GM10248 (cell line): ENCODE measurements at regions of chr3 and their contacts with region 1.

Region 1: DNA sequence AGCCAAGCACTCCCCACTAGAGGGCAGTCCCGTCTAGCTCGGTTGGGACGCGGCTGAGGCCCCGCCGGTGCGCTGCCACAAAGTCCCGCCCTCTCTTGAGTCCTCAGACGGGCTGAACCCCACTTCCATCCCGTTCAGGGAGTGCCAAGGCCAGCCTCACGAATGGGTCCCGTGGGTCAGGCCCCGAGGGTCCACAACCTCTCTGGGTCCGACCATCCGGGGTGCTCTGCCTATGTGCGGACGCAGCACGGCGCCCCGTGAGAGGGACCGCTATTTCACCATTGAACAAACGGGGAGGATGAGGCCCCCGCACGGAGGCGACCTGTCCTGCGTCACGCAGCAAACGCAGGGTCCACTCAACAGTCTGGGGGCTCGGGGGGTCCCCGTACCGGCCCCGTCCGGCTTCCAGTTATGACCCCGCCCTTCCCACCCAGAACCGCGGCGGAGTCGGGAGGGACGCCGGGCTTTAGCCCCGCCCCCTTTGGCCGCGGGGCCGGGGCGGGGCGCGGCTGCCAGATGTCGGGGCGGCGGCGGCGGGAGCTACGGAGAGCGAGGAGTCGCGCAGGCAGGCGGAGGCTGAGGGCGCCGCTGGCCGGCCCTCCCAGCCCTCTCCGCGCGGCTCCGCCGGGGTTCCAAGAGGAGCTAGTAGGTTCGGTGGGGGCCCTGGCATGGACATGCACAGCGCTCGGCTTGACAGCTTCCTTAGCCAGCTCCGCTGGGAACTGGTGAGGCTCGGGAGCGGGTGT is at the start of gene INKA1:
- DNase-seq: peak; percentile 92
- CTCF ChIP-seq: peak; percentile 88

Region 2: GRCh38 chr3:49786241-49786958 is 16.5 kb before region 1 on chr3 and contains the start of gene IP6K1:
- CTCF ChIA-PET with region 1: interaction called, 38 read pairs
- POLR2A ChIA-PET with region 1: interaction called, 6 read pairs
- DNase-seq: peak; percentile 100
- CTCF ChIP-seq: no peak

Region 3: DNA sequence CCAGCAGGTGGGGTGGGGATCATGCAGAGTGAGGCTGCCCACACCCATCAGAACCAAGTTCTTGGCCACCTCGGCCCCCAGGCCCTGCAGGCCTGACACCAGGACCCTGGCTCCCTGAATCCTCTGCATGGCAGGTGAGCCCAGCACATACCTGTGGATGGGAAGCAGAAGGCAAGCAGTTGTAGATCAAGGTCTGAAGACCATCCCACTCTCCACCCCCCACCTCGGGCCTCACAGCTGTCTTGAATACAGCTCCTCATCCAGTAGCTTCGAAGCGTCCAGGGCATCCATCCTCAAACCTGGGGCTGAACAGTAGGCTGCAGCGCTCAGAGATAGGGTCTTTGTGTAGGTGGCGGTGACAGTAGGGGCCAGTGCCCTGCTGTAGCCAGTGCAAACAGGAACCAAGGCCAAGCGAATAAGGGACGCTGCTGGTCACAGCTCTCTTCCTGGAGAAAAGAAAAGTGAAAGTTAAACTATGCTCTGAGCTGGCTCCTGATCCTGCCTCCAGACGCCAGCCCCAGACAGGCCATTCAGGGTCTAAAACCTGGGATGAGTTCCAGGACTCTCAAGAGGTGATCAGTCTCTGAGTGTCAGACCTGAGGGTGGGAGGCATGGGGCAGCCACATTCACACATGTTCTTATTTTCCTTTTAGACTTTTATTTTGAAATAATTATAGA is 10.7 kb after region 1 on chr3 and contains the start of gene UBA7:
- CTCF ChIA-PET with region 1: interaction called, 38 read pairs
- POLR2A ChIA-PET with region 1: interaction called, 8 read pairs
- DNase-seq: peak; percentile 84
- CTCF ChIP-seq: no peak

Region 4: GRCh38 chr3:49826016-49826415 is 23.1 kb after region 1 on chr3:
- CTCF ChIA-PET with region 1: interaction called, 558 read pairs
- POLR2A ChIA-PET with region 1: interaction called, 3 read pairs
- DNase-seq: no peak
- CTCF ChIP-seq: no peak

Region 5: GRCh38 chr3:49856181-49857005 is 53.5 kb after region 1 on chr3 and contains the start of gene TRAIP:
- CTCF ChIA-PET with region 1: interaction called, 18 read pairs
- POLR2A ChIA-PET with region 1: no interaction called
- DNase-seq: peak; percentile 100
- CTCF ChIP-seq: no peak

Region 6: GRCh38 chr3:49899815-49900214 is 96.9 kb after region 1 on chr3:
- CTCF ChIA-PET with region 1: interaction called, 10 read pairs
- POLR2A ChIA-PET with region 1: no interaction called
- DNase-seq: no peak
- CTCF ChIP-seq: no peak